Endothelial cell of umbilical vein (primary cell): ENCODE measurements at regions of chr11 and their contacts with region 1.

Region 1: DNA sequence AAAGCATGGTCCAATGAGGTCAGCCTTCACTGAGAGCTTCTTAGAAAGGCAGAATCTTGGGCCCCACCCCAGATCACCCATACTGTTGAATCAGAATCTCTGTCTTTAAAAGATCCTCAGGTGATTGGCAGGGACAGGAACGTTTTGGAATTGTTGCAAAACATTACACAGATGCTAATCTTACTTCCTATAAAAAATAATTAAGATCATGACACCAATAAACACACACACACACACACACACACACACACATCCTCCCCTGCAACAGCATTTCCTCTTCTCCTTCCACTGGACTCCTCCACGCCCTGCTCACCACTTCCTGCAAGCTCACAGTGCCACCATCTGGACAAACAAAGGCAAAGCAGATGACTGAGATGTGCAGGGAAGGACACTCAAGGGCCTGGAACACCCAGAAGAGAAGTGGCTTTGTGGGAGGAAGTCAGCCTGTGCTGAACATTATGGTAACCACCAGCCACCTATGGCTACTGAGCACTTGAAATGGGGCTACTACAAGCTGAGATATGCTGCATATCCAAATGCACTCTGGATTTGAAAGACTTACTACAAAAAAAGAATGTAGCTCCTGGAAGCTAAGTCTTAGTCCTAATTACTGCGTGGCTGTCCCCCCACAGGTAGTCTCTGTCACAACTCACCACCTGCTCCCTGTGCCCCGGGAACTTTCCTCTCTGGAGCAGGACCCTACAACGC is 65.6 kb downstream of the BTG4 start:
- DNase-seq: peak; percentile 79
- H3K4me3 ChIP-seq: no peak overlapping the region
- H3K27ac ChIP-seq: no peak overlapping the region
- H3K4me1 ChIP-seq: peaks cover 3% of the 10 kb centered on the region
- H3K27me3 ChIP-seq: no peaks in the 10 kb centered on the region
- CTCF ChIP-seq: peak; percentile 76 to 85
- POLR2A ChIP-seq: no peak

Region 2: GRCh38 chr11:110463153-110463552 is 983.4 kb before region 1 on chr11:
- CTCF ChIA-PET with region 1: interaction called, 4 read pairs
- POLR2A ChIA-PET with region 1: no interaction called
- dilution Hi-C with region 1: no loop called
- intact Hi-C with region 1: loop called (anchors 10 kb)
- DNase-seq: peak; percentile 39
- H3K4me3 ChIP-seq: no peak overlapping the region
- H3K27ac ChIP-seq: no peak overlapping the region
- H3K4me1 ChIP-seq: no peaks in the 10 kb centered on the region
- H3K27me3 ChIP-seq: no peaks in the 10 kb centered on the region
- CTCF ChIP-seq: peak; percentile 41 to 51
- POLR2A ChIP-seq: no peak

Region 3: GRCh38 chr11:111283945-111284481 is 162.5 kb before region 1 on chr11:
- CTCF ChIA-PET with region 1: interaction called, 93 read pairs
- POLR2A ChIA-PET with region 1: no interaction called
- dilution Hi-C with region 1: no loop called
- intact Hi-C with region 1: loop called (anchors 1 kb)
- DNase-seq: no peak
- H3K4me3 ChIP-seq: no peak overlapping the region
- H3K27ac ChIP-seq: no peak overlapping the region
- H3K4me1 ChIP-seq: no peaks in the 10 kb centered on the region
- H3K27me3 ChIP-seq: peaks cover 1 to 2% of the 10 kb centered on the region in 2 experiments
- CTCF ChIP-seq: no peak
- POLR2A ChIP-seq: no peak

Region 4: DNA sequence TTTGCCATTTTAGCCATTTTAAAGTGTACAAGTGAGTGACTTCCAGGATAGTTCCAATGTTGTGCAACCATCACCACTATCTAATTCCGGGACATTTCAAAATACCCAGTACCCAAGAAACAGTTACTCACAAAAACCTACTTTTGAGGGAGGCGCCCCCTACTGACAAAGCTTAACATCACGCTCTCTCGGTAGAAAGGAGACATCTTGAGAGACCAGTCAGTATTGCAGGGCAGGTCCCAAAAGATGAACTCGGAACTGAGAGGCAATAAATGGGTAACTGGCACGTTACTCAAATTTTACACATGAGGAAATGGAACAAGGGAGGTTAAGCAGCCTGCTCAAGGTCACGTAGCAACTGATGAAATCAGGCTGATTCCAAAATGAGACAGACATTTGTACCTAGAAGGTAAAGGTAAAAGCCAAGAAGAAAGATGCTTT is 17.5 kb before region 1 on chr11:
- CTCF ChIA-PET with region 1: interaction called, 18 read pairs
- POLR2A ChIA-PET with region 1: no interaction called
- dilution Hi-C with region 1: no loop called
- intact Hi-C with region 1: no loop called
- DNase-seq: peak; percentile 23
- H3K4me3 ChIP-seq: no peak overlapping the region
- H3K27ac ChIP-seq: no peak overlapping the region
- H3K4me1 ChIP-seq: no peaks in the 10 kb centered on the region
- H3K27me3 ChIP-seq: peaks cover 2 to 7% of the 10 kb centered on the region in 2 experiments
- CTCF ChIP-seq: peak; percentile 54
- POLR2A ChIP-seq: no peak

Region 5: GRCh38 chr11:111460856-111461255 is 14.3 kb after region 1 on chr11:
- CTCF ChIA-PET with region 1: interaction called, 13 read pairs
- POLR2A ChIA-PET with region 1: no interaction called
- dilution Hi-C with region 1: no loop called
- intact Hi-C with region 1: no loop called
- DNase-seq: no peak
- H3K4me3 ChIP-seq: no peak overlapping the region
- H3K27ac ChIP-seq: no peak overlapping the region
- H3K4me1 ChIP-seq: no peaks in the 10 kb centered on the region
- H3K27me3 ChIP-seq: no peaks in the 10 kb centered on the region
- CTCF ChIP-seq: no peak
- POLR2A ChIP-seq: no peak

Region 6: DNA sequence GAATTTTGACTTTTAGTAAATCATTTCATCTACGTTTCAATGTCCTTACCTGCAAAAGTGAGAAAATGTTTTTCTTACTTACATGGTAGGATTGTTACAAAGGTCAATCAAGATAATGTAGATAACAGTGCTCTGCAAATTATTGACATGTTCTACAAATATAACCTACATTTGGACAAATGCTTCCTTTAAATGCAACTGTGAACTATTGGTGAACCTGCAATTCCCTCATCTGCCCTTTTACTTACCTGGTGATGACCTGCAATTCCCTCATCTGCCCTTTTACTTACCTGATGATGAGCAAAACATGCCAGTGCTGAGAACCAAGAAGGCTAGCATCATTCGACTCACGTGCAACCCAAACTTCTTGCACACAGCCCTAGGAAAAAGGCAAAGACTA is 413.7 kb after region 1 on chr11:
- CTCF ChIA-PET with region 1: no interaction called
- POLR2A ChIA-PET with region 1: no interaction called
- dilution Hi-C with region 1: no loop called
- intact Hi-C with region 1: no loop called
- DNase-seq: no peak
- H3K4me3 ChIP-seq: no peak overlapping the region
- H3K27ac ChIP-seq: no peak overlapping the region
- H3K4me1 ChIP-seq: no peaks in the 10 kb centered on the region
- H3K27me3 ChIP-seq: no peaks in the 10 kb centered on the region
- CTCF ChIP-seq: no peak
- POLR2A ChIP-seq: no peak